PC-3 (cell line): ENCODE measurements at regions of chr16 and their contacts with region 1.

Region 1: GRCh38 chr16:27203429-27204231 is at the start of gene KDM8:
- DNase-seq: peak; percentile 98
- ATAC-seq: peak; percentile 94
- H3K4me3 ChIP-seq: peak within 1 kb of the TSS; percentile 77
- H3K27ac ChIP-seq: peak within 1 kb of the TSS; percentile 86
- H3K4me1 ChIP-seq: peaks cover 5% of the 10 kb centered on the region; the same call in 1 of the 2 replicates
- H3K27me3 ChIP-seq: no peaks in the 10 kb centered on the region
- CTCF ChIP-seq: no peak
- total RNA-seq, gene KDM8: 5.0 and 7.8 TPM in 2 replicates

Region 2: GRCh38 chr16:27154705-27155521 is 48.7 kb before region 1 on chr16:
- CTCF ChIA-PET with region 1: no interaction called
- POLR2A ChIA-PET with region 1: no interaction called
- intact Hi-C with region 1: loop called (anchors 5 kb)
- DNase-seq: peak; percentile 41
- ATAC-seq: peak; percentile 60; the same call in 1 of the 2 replicates
- H3K4me3 ChIP-seq: no peak overlapping the region
- H3K27ac ChIP-seq: no peak overlapping the region
- H3K4me1 ChIP-seq: no peaks in the 10 kb centered on the region
- H3K27me3 ChIP-seq: no peaks in the 10 kb centered on the region
- CTCF ChIP-seq: peak; percentile 84

Region 3: DNA sequence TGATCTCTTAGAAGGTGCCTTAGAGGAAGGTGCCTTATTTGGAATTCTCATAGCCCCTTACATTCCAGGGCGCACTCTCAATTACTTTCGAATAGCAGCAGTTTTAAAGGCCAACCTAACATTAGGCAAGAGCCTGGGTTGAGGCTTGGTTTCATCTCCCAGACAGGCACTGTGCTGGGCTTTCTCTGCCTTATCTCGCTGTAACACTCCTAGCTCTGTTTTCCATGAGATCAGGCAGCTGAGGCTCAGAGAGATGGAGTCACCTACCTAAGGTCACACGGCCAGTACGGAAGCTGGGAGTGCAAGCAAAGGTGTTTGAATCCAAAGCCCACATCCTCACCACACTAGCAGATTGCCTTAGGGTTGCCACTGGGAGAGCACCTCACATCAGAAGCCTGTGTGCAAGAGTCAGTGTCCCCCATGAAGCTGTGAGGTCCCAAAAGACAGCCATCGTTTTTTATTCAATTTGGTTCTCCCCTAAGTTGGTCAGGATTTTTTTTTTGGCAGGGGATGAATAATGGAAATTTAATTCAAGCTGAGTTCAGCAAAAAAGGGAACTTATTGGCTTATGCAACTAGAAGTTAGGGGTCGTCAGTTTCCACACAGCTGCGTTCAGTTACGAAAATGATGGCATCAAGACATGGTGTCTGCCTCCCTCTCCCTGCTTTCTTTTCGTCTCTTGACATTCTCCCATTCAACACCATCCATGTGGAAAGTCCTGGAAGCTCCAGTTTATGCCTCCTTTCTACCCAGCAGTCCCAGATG is 552.8 kb after region 1 on chr16:
- CTCF ChIA-PET with region 1: no interaction called
- POLR2A ChIA-PET with region 1: no interaction called
- intact Hi-C with region 1: no loop called
- DNase-seq: no peak
- ATAC-seq: no peak
- H3K4me3 ChIP-seq: no peak overlapping the region
- H3K27ac ChIP-seq: no peak overlapping the region
- H3K4me1 ChIP-seq: peaks cover 12% of the 10 kb centered on the region
- H3K27me3 ChIP-seq: no peaks in the 10 kb centered on the region
- CTCF ChIP-seq: no peak